GM12878 (cell line): ENCODE measurements at regions of chr4 and their contacts with region 1.

Region 1: GRCh38 chr4:185479507-185479971 is 8.0 kb upstream of the CCDC110 start:
- DNase-seq: peak; percentile 47
- ATAC-seq: peak; percentile 93
- H3K4me3 ChIP-seq: peak overlapping the region; percentile 43; the same call in 1 of the 2 replicates
- H3K27ac ChIP-seq: peak overlapping the region; percentile 67
- H3K4me1 ChIP-seq: peaks cover 15% of the 10 kb centered on the region
- H3K27me3 ChIP-seq: no peaks in the 10 kb centered on the region
- CTCF ChIP-seq: no peak
- EP300 ChIP-seq: peak in 1 of 2 experiments; percentile 8; a peak in 1 of 4 replicates
- POLR2A ChIP-seq: no peak
- RAD21 ChIP-seq: no peak

Region 2: DNA sequence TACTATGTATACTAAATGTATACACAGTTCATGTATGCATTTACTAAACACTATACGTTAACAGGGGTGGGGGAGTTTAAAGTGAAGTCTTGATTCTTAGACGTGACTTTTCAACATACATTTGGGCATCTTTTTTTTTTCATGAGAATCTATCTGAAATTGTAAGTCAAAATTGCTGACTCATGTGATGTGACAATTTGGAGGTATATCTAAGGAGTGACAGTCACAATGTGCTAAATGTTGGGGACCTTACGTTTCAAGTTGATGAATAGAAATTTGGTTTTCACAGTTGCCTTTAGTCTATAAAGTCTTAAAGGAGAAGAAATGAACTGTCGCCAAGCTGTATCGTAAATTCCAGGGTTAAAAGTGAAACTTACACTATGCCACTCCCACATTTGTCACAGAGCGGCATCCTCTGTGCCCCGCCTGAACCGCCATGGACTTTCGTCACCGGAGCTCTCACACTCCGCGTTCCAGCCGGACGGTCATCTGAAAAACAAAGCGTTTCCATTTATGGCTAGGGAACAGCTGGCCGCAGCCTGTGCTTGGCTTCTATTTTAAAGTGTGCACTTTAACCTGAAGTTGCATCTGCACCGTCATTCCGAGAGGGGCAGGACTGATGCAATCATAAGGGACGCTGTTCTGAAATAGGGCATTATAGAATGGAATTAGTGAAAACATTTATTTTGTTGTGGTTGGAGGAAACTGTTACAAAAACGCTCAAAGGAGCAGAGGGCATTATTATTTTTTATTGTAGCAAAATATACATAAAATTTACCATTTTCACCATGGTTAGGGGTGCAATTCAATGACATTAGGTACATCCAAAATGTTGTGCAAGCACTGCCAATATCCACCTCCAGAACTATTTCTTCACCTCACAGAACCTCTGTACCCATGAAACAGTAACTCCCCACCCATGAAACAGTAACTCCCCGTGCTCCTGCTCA is 24.8 kb after region 1 on chr4:
- CTCF ChIA-PET with region 1: no interaction called
- POLR2A ChIA-PET with region 1: no interaction called
- RAD21 ChIA-PET with region 1: no interaction called
- SMC1A ChIA-PET with region 1: no interaction called
- in situ Hi-C with region 1: no loop called
- intact Hi-C with region 1: loop called (anchors 2 kb)
- DNase-seq: no peak
- ATAC-seq: no peak
- H3K4me3 ChIP-seq: no peak overlapping the region
- H3K27ac ChIP-seq: no peak overlapping the region
- H3K4me1 ChIP-seq: no peaks in the 10 kb centered on the region
- H3K27me3 ChIP-seq: no peaks in the 10 kb centered on the region
- CTCF ChIP-seq: no peak
- EP300 ChIP-seq: no peak
- POLR2A ChIP-seq: no peak
- RAD21 ChIP-seq: no peak

Region 3: GRCh38 chr4:185587427-185588161 is 108.1 kb after region 1 on chr4:
- CTCF ChIA-PET with region 1: no interaction called
- POLR2A ChIA-PET with region 1: no interaction called
- RAD21 ChIA-PET with region 1: no interaction called
- SMC1A ChIA-PET with region 1: no interaction called
- in situ Hi-C with region 1: loop called (anchors 5 kb)
- intact Hi-C with region 1: no loop called
- DNase-seq: peak; percentile 26
- ATAC-seq: peak; percentile 98
- H3K4me3 ChIP-seq: no peak overlapping the region; the same call in 1 of the 2 replicates
- H3K27ac ChIP-seq: peak overlapping the region; percentile 70
- H3K4me1 ChIP-seq: peaks cover 9% of the 10 kb centered on the region
- H3K27me3 ChIP-seq: no peaks in the 10 kb centered on the region
- CTCF ChIP-seq: no peak
- EP300 ChIP-seq: peak; percentile 59 to 73; a peak in 2 of 4 replicates
- POLR2A ChIP-seq: 0 out of 2 replicates have a peak, but pooled peaks have one; percentile 52
- RAD21 ChIP-seq: no peak